ENCODE measurements at regions of chr18 and their contacts with region 1.

Region 1: GRCh38 chr18:79380816-79381806 is 14.6 kb upstream of the NFATC1 start:
- DNase-seq: no peak
- H3K4me3 ChIP-seq: no peak overlapping the region
- CTCF ChIP-seq: peak; percentile 81

Region 2: GRCh38 chr18:79538635-79539034 is 157.5 kb after region 1 on chr18:
- in situ Hi-C with region 1: loop called (anchors 5 kb)
- DNase-seq: no peak
- H3K4me3 ChIP-seq: no peak overlapping the region
- CTCF ChIP-seq: no peak

Region 3: DNA sequence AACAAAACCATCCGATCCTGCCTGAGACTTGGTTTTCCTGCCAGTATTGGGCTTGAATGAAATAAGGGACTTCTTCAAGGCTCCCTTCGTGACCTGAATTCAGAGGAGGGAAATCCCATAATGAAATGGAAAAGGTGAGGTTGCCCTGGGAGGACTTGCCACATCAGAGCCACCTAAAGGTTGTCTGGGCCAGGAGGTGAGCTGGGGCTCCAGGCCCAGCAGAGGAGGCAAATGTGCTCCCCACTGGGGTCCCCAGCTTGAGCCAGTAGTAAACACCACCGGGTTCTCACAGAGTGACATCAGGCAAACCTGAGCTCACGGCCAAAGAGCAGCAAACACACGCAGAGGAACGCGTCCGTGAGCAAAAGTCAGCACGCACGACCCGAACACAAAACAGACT is 269.8 kb after region 1 on chr18:
- in situ Hi-C with region 1: loop called (anchors 5 kb)
- DNase-seq: no peak
- H3K4me3 ChIP-seq: no peak overlapping the region
- CTCF ChIP-seq: no peak

Region 4: DNA sequence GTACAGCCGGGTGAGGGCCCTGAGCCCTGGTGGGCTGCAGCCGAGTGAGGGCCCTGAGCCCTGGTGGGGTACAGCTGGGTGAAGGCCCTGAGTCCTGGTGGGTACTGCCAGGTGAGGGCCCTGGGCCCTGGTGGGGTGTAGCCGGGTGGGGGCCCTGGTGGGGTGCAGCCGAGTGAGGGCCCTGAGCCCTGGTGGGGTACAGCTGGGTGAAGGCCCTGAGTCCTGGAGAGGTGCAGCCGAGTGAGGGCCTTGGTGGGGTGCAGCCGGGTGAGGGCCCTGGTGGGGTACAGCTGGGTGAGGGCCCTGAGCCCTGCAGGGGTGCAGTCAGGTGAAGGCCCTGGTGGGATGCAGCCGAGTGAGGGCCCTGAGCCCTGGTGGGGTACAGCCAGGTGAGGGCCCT is 335.9 kb after region 1 on chr18:
- in situ Hi-C with region 1: loop called (anchors 10 kb)
- DNase-seq: no peak
- H3K4me3 ChIP-seq: no peak overlapping the region
- CTCF ChIP-seq: no peak

Measured in astrocyte of the cerebellum (primary cell).